ENCODE measurements at regions of chr21 and their contacts with region 1.

Region 1: DNA sequence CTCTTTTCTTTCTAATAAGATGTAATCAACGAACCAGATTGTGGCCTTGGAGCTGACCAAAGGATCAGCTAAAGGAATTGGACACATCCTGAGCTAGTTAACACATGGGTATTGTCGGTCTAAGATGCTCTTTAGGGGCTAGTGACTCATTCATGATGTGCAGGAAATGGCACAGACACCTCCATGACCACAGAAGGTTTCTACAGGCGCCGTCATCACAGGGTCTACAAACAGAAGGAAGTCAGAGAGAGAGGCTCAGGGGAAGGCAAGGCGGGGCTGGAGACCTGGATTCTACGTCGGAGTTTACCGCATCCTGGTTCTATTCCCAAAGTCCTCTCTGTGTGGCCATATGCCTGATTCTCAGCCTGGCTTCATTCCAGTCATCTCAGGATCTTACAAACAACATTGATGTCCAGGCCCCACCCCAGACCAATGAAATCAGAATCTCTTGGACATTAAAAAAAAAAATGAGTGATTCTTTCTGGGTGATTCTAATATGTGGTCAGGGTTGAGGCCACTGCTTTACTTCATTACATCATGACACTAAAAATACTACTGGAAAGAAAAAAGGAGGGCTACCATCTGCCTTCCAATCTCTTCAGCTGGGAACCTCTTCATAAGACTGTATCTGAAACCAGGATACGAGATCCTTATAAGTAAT is 11.8 kb upstream of the KCNJ15 start:
- DNase-seq: peak; percentile 30 to 66 (median 58)
- H3K4me3 ChIP-seq: no peak overlapping the region
- H3K4me3 Mint-ChIP-seq: peak overlapping the region in 5 of 8 donors; percentile 3 to 28 (median 9)
- H3K27ac ChIP-seq: no peak overlapping the region
- H3K27ac Mint-ChIP-seq: peak overlapping the region; percentile 13 to 93 (median 85)
- H3K4me1 ChIP-seq: peaks cover 15% of the 10 kb centered on the region
- H3K4me1 Mint-ChIP-seq: peaks cover 11 to 13% (median 12%) of the 10 kb centered on the region in 4 donors
- H3K27me3 ChIP-seq: no peaks in the 10 kb centered on the region
- H3K27me3 Mint-ChIP-seq: peaks cover 0 to 8% of the 10 kb centered on the region in 2 donors

Region 2: DNA sequence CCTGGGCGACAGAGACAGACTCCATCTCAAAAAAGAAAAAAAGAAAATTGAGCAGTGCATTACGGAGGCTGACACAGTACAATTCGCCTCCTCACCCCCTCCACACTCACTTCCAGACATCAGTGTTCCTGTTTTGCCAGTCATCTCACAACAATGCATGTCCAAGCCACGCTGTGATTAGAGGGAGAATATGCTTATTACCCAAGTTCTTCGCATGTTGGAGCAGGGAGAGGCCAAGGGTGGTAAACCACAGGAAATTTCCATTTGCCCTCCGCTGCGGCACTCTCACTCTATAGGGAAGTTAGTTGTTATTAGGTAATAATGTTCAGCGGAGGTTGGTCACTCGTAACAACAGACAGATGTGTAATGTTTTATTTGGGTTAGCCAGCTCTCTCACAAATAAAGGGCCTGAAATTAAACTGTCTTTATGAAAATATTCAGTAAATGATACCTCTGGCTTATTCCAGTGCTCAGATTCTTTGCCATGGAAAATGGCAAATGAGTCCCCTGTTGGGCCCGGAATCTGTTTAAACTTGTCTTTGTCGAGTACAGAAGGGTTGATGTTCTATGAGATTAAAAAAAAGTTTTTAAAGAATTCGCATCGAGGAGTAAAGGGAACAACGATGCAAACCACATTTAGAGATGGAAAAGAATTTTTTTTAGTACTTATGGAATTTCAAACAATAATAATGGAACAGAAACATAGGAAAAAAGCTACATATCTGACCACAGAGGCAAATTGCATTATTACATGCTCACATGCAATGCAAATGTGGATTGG is 44.9 kb after region 1 on chr21:
- CTCF ChIA-PET with region 1: no interaction called
- POLR2A ChIA-PET with region 1: interaction called, 4 read pairs
- intact Hi-C with region 1: loop called (anchors 10 kb)
- DNase-seq: no peak
- H3K4me3 ChIP-seq: no peak overlapping the region
- H3K4me3 Mint-ChIP-seq: no peak overlapping the region
- H3K27ac ChIP-seq: no peak overlapping the region
- H3K27ac Mint-ChIP-seq: no peak overlapping the region
- H3K4me1 ChIP-seq: peaks cover 3% of the 10 kb centered on the region
- H3K4me1 Mint-ChIP-seq: peaks cover 1 to 7% (median 5%) of the 10 kb centered on the region in 4 donors
- H3K27me3 ChIP-seq: no peaks in the 10 kb centered on the region
- H3K27me3 Mint-ChIP-seq: peaks cover 0 to 5% of the 10 kb centered on the region in 2 donors